ENCODE measurements at regions of chr22 and their contacts with region 1.

Region 1: GRCh38 chr22:22710719-22711531 is 66.5 kb downstream of the GGTLC2 start:
- DNase-seq: peak; percentile 85
- ATAC-seq: peak; percentile 85
- H3K4me3 Mint-ChIP-seq: no peak overlapping the region
- H3K27ac Mint-ChIP-seq: no peak overlapping the region
- H3K4me1 Mint-ChIP-seq: no peaks in the 10 kb centered on the region
- H3K27me3 Mint-ChIP-seq: no peaks in the 10 kb centered on the region
- CTCF ChIP-seq: peak; percentile 97

Region 2: DNA sequence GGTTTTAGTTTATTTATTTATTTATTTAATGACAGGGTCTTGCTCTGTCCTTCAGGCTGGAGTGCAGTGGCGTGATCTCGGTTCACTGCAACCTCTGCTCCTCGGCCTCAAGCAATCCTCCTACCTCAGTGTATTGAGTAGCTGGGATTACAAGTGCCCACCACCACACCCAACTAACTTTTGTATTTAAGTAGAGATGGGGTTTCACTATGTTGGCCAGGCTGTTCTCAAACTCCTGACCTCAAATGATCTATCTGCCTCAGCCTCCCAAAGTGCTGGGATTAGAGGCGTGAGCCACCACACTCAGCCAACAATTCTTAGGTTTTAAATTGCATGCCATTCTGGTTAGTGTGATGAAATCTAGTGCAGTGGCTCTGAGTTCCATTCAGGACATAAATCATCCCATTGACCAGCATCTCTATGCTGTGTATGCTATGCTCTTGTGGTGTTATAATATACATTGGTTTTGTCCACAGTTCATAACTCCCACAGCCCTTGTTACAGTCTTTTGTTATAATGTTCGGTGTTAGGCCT is 230.9 kb before region 1 on chr22:
- CTCF ChIA-PET with region 1: no interaction called
- POLR2A ChIA-PET with region 1: no interaction called
- intact Hi-C with region 1: no loop called
- DNase-seq: no peak
- ATAC-seq: no peak
- H3K4me3 Mint-ChIP-seq: no peak overlapping the region
- H3K27ac Mint-ChIP-seq: no peak overlapping the region
- H3K4me1 Mint-ChIP-seq: no peaks in the 10 kb centered on the region
- H3K27me3 Mint-ChIP-seq: no peaks in the 10 kb centered on the region
- CTCF ChIP-seq: no peak

Region 3: DNA sequence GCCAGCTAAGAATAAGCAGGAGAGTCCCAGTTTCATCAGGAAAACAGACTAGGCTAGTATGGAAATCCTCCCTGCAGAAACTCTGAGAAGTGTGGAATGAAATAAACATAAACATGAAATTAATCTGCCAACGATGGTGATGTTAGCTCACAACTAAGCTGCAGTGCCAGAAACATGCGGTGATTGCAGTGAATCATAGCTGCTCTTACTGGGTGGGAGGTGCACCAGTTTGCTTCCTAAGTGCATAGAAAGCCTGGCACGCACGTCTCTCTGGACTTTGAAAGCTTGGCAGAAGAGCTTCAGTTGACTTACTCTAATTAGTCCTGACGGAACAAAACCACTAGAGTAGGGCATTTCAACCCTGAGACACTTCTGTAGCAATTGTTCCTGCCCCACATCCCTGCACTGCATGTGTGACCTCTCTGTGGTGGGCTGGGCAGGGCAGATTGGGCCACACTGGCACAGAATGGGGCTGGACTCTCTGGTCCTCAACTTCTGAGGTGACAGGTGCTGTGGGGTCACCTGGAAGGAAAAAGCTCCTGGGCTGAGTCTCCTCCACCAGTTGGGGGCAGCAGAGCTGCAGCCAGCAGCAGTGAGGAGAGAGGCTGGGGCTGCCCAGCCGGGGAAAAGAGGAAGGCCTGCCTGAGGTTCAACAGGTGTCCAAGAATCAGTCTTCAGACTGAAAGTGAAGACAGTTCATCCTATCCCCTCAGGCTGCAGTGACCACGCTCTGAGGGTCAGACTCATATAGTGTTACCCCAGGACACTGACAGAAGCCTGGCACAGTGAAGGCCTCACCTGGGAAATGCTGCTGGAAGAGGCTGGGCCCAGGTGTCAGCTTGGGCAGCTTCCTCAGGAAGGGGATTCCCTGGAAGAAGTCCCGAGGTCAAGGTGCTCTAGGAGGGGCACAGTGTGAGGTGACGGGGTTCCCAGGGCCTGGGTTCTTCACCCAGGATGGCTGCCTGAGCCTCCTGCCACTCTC is 26.1 kb before region 1 on chr22:
- CTCF ChIA-PET with region 1: interaction called, 10 read pairs
- POLR2A ChIA-PET with region 1: no interaction called
- intact Hi-C with region 1: no loop called
- DNase-seq: peak; percentile 31
- ATAC-seq: peak; percentile 51
- H3K4me3 Mint-ChIP-seq: no peak overlapping the region
- H3K27ac Mint-ChIP-seq: no peak overlapping the region
- H3K4me1 Mint-ChIP-seq: no peaks in the 10 kb centered on the region
- H3K27me3 Mint-ChIP-seq: no peaks in the 10 kb centered on the region
- CTCF ChIP-seq: peak; percentile 47

Region 4: DNA sequence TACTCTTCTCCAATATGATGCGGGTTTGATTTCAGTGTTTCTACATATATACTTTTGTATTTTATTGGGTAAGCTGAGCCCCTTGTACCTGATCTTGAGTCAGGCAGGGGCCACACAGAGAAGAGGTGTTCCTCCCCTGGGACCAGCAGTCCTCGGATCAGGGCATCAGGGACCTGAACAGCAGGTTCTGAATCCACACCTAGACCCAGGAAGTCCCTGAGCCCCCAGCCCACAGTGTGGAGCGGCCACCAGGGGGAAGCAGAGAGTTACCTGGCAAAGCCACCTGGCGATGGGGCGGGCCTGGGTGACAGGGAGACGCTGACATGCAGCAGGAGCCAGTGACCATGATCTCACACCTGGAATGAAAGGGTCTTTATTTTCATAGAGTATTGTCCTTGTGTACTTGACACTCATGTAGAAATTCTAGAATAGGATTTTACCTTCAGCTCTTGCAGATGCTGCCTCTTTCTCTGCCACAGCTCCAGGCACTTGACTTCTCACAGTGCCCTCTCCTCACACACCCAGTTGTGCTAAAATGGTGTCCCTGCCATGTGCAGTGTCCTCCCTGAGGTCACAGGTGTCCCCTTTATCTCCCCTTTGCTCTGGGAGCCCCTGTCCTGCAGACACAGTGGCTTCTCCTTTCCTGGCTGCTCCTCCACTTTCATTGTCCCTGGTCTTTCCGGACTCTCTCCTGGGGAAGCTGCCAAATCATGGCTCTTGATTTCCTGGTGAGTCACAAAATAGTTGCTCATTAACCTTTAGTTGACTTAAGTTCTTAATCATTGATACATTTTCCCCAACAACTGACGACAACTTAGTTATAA is 18.0 kb before region 1 on chr22:
- CTCF ChIA-PET with region 1: interaction called, 10 read pairs
- POLR2A ChIA-PET with region 1: no interaction called
- intact Hi-C with region 1: no loop called
- DNase-seq: peak; percentile 72
- ATAC-seq: peak; percentile 71
- H3K4me3 Mint-ChIP-seq: no peak overlapping the region
- H3K27ac Mint-ChIP-seq: no peak overlapping the region
- H3K4me1 Mint-ChIP-seq: no peaks in the 10 kb centered on the region
- H3K27me3 Mint-ChIP-seq: no peaks in the 10 kb centered on the region
- CTCF ChIP-seq: peak; percentile 71

Region 5: DNA sequence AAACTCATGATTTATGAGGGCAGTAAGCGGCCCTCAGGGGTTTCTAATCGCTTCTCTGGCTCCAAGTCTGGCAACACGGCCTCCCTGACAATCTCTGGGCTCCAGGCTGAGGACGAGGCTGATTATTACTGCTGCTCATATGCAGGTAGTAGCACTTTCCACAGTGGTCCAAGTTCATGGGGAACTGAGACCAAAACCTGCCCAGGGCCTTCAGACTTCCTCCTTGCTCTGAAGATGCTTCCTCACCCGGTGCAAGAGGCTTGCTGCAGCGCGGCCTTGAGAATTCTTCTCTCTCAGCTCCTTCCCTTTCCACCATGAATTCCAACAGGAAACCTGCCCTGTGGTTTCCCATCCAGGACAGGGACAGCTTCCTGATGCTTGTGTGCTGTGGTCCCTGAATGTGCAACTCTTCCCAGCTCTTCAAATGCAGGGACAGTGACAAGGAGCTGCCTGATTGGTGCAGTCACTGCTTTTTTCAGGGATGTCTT is 12.6 kb before region 1 on chr22:
- CTCF ChIA-PET with region 1: interaction called, 17 read pairs
- POLR2A ChIA-PET with region 1: interaction called, 5 read pairs
- intact Hi-C with region 1: no loop called
- DNase-seq: no peak
- ATAC-seq: no peak
- H3K4me3 Mint-ChIP-seq: no peak overlapping the region
- H3K27ac Mint-ChIP-seq: no peak overlapping the region
- H3K4me1 Mint-ChIP-seq: no peaks in the 10 kb centered on the region
- H3K27me3 Mint-ChIP-seq: no peaks in the 10 kb centered on the region
- CTCF ChIP-seq: no peak

Measured in activated CD8-positive, alpha-beta T cell treated with anti-CD3 and anti-CD28 coated beads for 36 hours (primary cell).